ENCODE measurements at regions of chr3 and their contacts with region 1.

Region 1: DNA sequence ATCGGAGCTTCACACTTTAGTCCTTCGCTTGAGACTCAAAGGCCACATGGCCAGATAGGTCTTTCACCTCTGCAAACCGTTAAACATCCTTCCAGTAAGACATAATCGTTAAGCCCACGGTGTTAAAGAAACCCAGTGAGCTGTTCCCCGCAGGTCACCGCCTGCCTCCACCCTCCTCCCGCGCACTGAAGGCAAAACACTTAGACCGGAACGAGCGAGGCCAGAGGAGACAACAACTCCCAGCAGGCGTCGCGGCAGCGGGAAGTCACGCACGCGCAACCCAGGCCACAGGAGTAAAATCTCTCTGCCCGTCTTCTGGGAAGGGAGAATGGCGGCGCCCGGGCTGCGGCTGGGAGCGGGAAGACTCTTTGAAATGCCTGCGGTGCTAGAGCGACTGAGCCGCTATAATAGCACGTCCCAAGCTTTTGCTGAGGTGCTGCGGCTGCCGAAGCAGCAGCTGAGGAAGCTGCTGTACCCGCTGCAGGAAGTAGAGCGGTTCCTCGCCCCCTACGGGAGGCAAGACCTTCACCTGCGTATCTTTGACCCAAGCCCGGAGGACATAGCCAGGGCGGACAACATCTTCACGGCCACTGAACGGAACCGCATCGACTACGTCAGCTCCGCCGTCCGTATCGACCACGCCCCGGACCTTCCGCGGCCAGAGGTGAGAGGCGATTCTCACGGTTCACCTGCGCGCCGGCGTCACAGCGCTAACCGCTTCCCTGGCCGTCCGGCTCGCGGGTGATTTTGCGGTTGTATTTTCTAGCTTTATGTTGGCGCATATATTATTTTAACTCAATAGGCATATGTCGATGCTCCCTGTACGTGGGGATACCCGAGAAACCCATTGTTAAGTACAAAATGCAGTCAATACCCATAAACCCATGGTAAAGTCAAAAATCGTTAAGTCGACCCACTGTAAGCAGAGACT is at the start of gene GTPBP8:
- DNase-seq: peak; percentile 62 to 93 (median 74)
- ATAC-seq: peak; percentile 96
- H3K4me3 ChIP-seq: peak within 1 kb of the TSS; percentile 62
- H3K27ac ChIP-seq: peak within 1 kb of the TSS; percentile 99
- H3K4me1 ChIP-seq: no peaks in the 10 kb centered on the region; a peak in 1 of 5 replicates
- H3K27me3 ChIP-seq: no peaks in the 10 kb centered on the region
- CTCF ChIP-seq: no peak
- EP300 ChIP-seq: no peak
- POLR2A ChIP-seq: peak; percentile 96
- RAD21 ChIP-seq: no peak
- polyA plus RNA-seq, gene GTPBP8: 27.4 to 33.3 TPM

Region 2: DNA sequence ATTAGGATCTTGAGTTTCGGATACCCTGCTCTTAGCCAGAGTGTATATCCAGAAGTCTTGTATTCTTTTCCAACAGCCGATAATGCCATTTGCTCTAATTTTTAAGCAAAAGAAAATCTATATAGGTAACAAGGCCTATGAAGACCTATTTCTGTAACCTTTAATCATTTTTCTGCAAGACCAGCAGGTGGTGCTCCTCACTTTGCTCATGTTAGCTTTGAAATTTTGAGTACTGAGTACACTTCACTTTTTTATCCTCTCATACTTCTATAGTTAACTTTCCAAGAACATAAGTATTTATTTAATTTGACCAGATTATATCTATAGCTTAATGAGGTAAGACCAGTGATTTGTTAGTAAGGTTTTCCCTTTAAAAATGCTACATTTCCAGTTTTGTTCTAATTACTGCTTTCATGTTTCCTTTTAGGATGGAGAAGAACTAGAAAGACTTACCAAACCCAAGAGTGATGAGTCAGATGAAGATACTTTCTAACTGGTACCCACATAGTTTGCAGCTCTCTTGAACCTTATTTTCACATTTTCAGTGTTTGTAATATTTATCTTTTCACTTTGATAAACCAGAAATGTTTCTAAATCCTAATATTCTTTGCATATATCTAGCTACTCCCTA is 408.6 kb before region 1 on chr3:
- CTCF ChIA-PET with region 1: no interaction called
- POLR2A ChIA-PET with region 1: no interaction called
- in situ Hi-C with region 1: no loop called
- intact Hi-C with region 1: loop called (anchors 5 kb)
- DNase-seq: peak in 3 of 4 experiments; percentile 11 to 49 (median 16)
- ATAC-seq: peak; percentile 53; the same call in 2 of the 3 replicates
- H3K4me3 ChIP-seq: no peak overlapping the region
- H3K27ac ChIP-seq: no peak overlapping the region
- H3K4me1 ChIP-seq: no peaks in the 10 kb centered on the region
- H3K27me3 ChIP-seq: no peaks in the 10 kb centered on the region
- CTCF ChIP-seq: peak; percentile 30 to 72 (median 40); a peak in 5 of 6 replicates
- EP300 ChIP-seq: no peak
- POLR2A ChIP-seq: no peak
- RAD21 ChIP-seq: peak; percentile 67 to 76

Region 3: GRCh38 chr3:113008117-113008516 is 17.2 kb after region 1 on chr3:
- CTCF ChIA-PET with region 1: no interaction called
- POLR2A ChIA-PET with region 1: interaction called, 11 read pairs
- in situ Hi-C with region 1: no loop called
- intact Hi-C with region 1: no loop called
- DNase-seq: no peak
- ATAC-seq: no peak
- H3K4me3 ChIP-seq: no peak overlapping the region
- H3K27ac ChIP-seq: no peak overlapping the region
- H3K4me1 ChIP-seq: no peaks in the 10 kb centered on the region
- H3K27me3 ChIP-seq: no peaks in the 10 kb centered on the region
- CTCF ChIP-seq: no peak
- EP300 ChIP-seq: no peak
- POLR2A ChIP-seq: no peak
- RAD21 ChIP-seq: no peak

Region 4: DNA sequence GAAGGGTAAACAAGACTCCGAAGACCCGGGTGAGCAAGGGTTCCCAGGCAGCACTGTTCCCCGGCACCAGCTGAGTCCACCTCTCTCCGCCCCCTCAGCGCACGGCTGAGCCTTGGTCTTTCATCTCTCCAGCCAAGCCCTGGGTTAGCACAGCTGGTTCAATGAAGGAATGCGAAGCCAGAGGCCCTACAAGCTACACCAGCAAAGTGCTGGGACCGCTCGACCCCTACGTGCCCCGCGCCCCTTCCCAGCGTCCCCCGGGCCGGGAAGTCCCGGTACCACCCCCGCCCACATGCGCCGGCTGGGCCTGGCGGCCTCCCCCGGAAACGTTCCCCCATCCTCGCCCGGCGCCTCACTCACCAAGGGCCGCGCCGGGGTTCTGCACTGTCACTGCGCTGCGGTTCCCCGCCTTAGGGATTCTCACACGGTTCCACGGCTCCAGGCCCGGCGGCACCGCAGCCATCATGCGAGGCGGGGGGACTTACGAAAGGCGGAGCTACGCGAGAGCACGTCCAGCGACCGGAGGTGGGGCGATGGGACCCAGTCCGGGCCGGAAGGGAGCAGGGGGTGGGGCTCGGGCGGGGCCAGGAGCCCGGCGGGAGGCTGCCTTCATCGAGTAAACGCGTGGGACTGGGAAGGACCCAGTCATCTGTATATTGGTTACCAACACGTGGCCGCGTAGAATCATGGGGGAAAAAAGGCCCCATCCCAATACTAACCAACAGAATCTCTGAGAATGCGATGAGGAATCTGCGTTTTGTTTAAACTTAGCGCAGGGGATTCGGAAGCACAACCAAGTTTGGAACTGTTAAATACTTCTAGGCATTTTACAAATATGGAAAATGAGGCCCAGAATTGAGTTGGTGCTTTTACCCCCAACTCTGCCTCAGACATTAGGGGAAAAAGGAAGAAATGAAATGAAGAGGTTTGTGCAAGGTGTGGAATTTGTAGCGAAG is 28.5 kb after region 1 on chr3:
- CTCF ChIA-PET with region 1: no interaction called
- POLR2A ChIA-PET with region 1: interaction called, 7 read pairs
- in situ Hi-C with region 1: no loop called
- intact Hi-C with region 1: loop called (anchors 1 kb)
- DNase-seq: peak; percentile 87 to 91 (median 88)
- ATAC-seq: peak; percentile 98
- H3K4me3 ChIP-seq: peak overlapping the region; percentile 86
- H3K27ac ChIP-seq: peak overlapping the region; percentile 83
- H3K4me1 ChIP-seq: peaks cover 0 to 10% of the 10 kb centered on the region in 2 experiments; a peak in 2 of 5 replicates
- H3K27me3 ChIP-seq: no peaks in the 10 kb centered on the region
- CTCF ChIP-seq: no peak
- EP300 ChIP-seq: no peak
- POLR2A ChIP-seq: peak; percentile 81
- RAD21 ChIP-seq: no peak

Region 5: GRCh38 chr3:113151461-113152031 is 160.6 kb after region 1 on chr3:
- CTCF ChIA-PET with region 1: no interaction called
- POLR2A ChIA-PET with region 1: no interaction called
- in situ Hi-C with region 1: no loop called
- intact Hi-C with region 1: no loop called
- DNase-seq: no peak
- ATAC-seq: no peak
- H3K4me3 ChIP-seq: no peak overlapping the region
- H3K27ac ChIP-seq: no peak overlapping the region
- H3K4me1 ChIP-seq: no peaks in the 10 kb centered on the region; a peak in 1 of 5 replicates
- H3K27me3 ChIP-seq: peaks cover 0 to 6% of the 10 kb centered on the region in 2 experiments; a peak in 1 of 5 replicates
- CTCF ChIP-seq: no peak
- EP300 ChIP-seq: no peak
- POLR2A ChIP-seq: no peak
- RAD21 ChIP-seq: no peak

Region 6: GRCh38 chr3:113264283-113265131 is 273.6 kb after region 1 on chr3:
- CTCF ChIA-PET with region 1: no interaction called
- POLR2A ChIA-PET with region 1: no interaction called
- in situ Hi-C with region 1: no loop called
- intact Hi-C with region 1: no loop called
- DNase-seq: no peak
- ATAC-seq: no peak
- H3K4me3 ChIP-seq: no peak overlapping the region
- H3K27ac ChIP-seq: no peak overlapping the region
- H3K4me1 ChIP-seq: no peaks in the 10 kb centered on the region
- H3K27me3 ChIP-seq: peaks cover 0 to 22% of the 10 kb centered on the region in 2 experiments; a peak in 2 of 5 replicates
- CTCF ChIP-seq: no peak
- EP300 ChIP-seq: no peak
- POLR2A ChIP-seq: no peak
- RAD21 ChIP-seq: no peak